Right ventricle myocardium inferior (tissue), 1 donor: ENCODE measurements at regions of chr1 and their contacts with region 1.

Region 1: DNA sequence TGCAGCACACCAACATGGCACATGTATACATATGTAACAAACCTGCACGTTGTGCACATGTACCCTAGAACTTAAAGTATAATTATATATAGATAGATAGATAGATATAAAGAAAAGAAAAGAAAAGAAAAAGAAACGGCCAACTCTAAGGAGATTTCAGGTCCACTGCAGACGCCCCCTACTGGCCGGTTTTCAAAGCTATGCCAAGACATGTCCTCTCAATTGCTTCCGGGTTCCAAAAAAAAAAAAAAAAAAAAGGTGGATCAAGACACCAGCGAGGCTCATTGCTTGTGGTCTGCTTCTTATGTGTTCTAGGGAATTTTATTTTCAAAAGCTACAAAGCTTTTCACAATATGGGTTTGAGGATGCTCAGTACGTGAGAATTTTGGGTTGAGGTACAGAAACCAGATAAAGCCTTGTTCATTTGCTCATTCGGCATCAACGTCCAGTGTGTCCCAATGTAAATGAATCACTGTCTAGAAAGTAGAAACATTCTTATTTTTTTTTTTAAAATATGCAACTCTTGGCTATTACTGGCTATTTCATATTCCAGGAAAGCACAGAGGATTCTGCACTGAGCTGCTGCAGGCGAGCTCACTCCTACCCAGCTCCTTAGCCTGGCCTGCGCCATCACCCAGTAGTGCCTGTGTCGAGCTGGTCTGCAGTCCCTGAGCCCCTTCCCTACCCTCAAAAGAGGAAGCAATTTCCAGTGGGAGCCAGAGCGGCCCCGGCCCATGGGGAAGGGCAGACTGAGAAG is 643.0 kb downstream of the KIF26B start:
- DNase-seq: no peak
- ATAC-seq: no peak

Region 2: DNA sequence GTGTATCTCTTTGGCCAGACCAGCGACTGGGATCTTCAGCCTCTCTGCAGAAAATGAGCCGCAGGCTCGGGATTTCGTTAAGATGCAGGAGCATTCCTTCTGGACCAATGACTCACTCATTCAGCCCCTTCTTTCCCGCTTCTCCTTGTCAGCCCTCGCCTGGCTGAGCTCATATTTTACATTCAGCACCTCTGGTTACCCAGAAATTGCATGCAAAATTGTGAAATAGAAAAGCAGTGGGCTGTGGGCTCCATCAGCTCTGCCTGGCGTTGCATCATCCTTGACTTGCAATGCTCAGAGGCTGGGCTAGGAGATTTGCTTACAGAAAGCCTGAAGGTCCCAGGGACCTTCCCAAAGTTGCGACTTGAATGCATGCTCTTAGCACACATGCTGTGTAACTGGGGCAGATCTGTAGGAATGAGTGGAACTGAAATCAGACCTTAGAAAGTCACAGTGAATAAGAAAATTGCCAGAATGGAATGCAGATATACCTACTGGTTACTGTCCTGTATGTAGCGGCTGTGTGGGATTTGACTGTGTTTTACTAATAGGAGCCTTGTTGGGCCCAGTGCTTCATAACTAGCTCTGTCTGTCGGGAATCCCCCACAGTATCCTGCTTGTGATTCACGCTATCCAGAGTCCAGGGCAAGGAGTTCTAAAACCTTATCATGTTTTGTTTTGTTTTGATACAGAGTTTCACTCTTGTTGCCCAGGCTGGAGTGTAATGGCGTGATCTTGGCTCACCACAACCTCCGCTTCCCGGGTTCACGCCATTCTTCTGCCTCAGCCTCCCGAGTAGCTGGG is 198.2 kb before region 1 on chr1:
- intact Hi-C with region 1: loop called (anchors 10 kb)
- DNase-seq: no peak
- ATAC-seq: peak; percentile 86